ENCODE measurements at regions of chrX and their contacts with region 1.

Region 1: DNA sequence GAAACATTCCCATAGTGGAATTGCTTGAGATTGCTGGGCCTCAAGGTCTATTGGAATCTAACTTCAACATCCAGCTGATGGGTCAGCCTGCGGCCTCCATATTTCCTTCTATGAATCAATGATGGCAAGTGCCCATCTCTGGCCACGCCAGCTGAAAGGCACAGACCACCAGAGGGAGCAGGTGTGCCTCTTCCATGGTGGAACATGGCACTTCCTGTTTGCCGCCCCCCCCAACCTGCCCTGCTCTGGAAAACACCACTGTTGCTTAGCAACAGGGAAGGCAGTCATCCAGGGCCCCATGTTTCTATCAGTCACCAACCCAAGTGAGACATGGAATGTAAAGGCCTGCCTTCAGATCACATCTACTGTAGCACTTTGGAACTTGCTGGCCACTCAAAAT is 11.6 kb downstream of the PAGE4 start:
- DNase-seq: peak; percentile 54
- H3K4me3 ChIP-seq: no peak overlapping the region
- H3K27ac ChIP-seq: no peak overlapping the region
- H3K4me1 ChIP-seq: no peaks in the 10 kb centered on the region
- H3K27me3 ChIP-seq: no peaks in the 10 kb centered on the region
- CTCF ChIP-seq: peak; percentile 38 to 49

Region 2: DNA sequence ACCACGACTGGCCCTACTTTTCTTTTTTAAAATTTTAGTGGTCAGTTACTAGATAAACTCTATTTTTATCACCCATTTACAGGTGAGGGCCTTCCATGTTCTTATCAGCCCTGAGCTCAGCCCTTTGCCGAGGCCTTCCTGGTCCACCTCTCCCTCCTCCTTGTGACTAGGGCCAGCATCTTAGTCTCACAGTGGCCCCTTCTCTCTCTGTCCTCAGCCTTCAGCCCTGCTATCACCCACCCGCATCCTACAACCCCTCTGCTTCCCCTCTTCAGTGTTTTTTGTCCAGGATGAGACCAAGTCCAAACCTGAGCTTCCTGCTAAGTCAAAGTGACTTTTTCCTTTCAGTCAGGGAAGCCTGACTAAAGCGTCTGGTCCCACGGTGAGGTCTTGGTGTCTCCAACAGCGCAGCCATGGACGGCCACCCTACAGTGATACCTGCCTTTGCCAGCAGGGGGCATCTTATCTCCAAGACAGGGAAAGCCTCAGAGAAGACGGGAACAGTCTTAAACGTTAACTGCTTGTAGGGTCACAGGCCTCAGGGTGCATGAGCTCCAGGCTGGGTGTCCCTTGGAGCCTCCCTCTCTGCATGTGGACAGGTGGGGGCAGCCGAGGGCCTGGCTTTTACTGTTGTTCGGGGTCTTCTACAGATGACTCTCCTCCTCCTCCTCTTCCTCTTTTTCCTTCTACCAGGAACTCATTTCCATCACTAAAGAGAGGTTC is 548.9 kb before region 1 on chrX:
- CTCF ChIA-PET with region 1: no interaction called
- dilution Hi-C with region 1: no loop called
- in situ Hi-C with region 1: no loop called
- intact Hi-C with region 1: loop called (anchors 1 kb)
- DNase-seq: peak; percentile 20
- H3K4me3 ChIP-seq: no peak overlapping the region
- H3K27ac ChIP-seq: no peak overlapping the region
- H3K4me1 ChIP-seq: no peaks in the 10 kb centered on the region
- H3K27me3 ChIP-seq: no peaks in the 10 kb centered on the region
- CTCF ChIP-seq: peak; percentile 45 to 65

Region 3: GRCh38 chrX:49761481-49761880 is 79.2 kb before region 1 on chrX:
- CTCF ChIA-PET with region 1: no interaction called
- dilution Hi-C with region 1: no loop called
- in situ Hi-C with region 1: no loop called
- intact Hi-C with region 1: loop called (anchors 1 kb)
- DNase-seq: no peak
- H3K4me3 ChIP-seq: no peak overlapping the region
- H3K27ac ChIP-seq: no peak overlapping the region
- H3K4me1 ChIP-seq: no peaks in the 10 kb centered on the region
- H3K27me3 ChIP-seq: peaks cover 2% of the 10 kb centered on the region
- CTCF ChIP-seq: peak; percentile 55 to 65

Region 4: GRCh38 chrX:49829016-49829415 is 11.7 kb before region 1 on chrX and contains the start of gene PAGE4:
- CTCF ChIA-PET with region 1: no interaction called
- dilution Hi-C with region 1: no loop called
- in situ Hi-C with region 1: no loop called
- intact Hi-C with region 1: no loop called
- DNase-seq: no peak
- H3K4me3 ChIP-seq: no peak within 1 kb of the TSS
- H3K27ac ChIP-seq: no peak within 1 kb of the TSS
- H3K4me1 ChIP-seq: no peaks in the 10 kb centered on the region
- H3K27me3 ChIP-seq: peaks cover 2% of the 10 kb centered on the region
- CTCF ChIP-seq: no peak
- total RNA-seq, gene PAGE4: not detected

Region 5: GRCh38 chrX:49878834-49879659 is 38.4 kb after region 1 on chrX and contains the start of gene USP27X:
- CTCF ChIA-PET with region 1: no interaction called
- dilution Hi-C with region 1: no loop called
- in situ Hi-C with region 1: no loop called
- intact Hi-C with region 1: loop called (anchors 1 kb)
- DNase-seq: peak; percentile 75
- H3K4me3 ChIP-seq: peak within 1 kb of the TSS; percentile 37 to 64 (median 51)
- H3K27ac ChIP-seq: peak within 1 kb of the TSS; percentile 25
- H3K4me1 ChIP-seq: peaks cover 10% of the 10 kb centered on the region
- H3K27me3 ChIP-seq: no peaks in the 10 kb centered on the region
- CTCF ChIP-seq: peak; percentile 40 to 49
- total RNA-seq, gene USP27X: 2.4 to 2.5 TPM

Region 6: GRCh38 chrX:49915361-49916222 is 74.9 kb after region 1 on chrX:
- CTCF ChIA-PET with region 1: no interaction called
- dilution Hi-C with region 1: no loop called
- in situ Hi-C with region 1: no loop called
- intact Hi-C with region 1: no loop called
- DNase-seq: peak; percentile 43
- H3K4me3 ChIP-seq: no peak overlapping the region
- H3K27ac ChIP-seq: no peak overlapping the region
- H3K4me1 ChIP-seq: no peaks in the 10 kb centered on the region
- H3K27me3 ChIP-seq: peaks cover 5% of the 10 kb centered on the region
- CTCF ChIP-seq: peak; percentile 92 to 96

Region 7: DNA sequence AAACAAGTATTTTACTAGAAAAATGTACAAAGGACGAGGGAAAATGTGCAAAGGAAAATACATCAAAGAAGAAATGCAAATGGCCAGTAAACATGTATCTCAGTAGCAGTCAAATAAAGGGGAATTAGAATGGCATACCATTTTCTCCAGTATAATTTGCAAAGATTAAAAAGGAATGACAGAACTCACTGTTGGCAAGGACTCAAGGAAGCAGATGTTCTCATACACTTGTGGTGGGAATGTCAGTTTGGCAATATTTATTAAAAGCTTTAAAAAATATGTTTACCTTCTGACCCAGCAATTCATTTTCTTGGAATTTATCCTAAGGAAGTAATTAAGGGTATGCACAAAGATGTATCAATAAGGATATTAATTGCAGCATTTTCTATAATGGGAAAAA is 89.4 kb after region 1 on chrX:
- CTCF ChIA-PET with region 1: no interaction called
- dilution Hi-C with region 1: no loop called
- in situ Hi-C with region 1: no loop called
- intact Hi-C with region 1: no loop called
- DNase-seq: no peak
- H3K4me3 ChIP-seq: no peak overlapping the region
- H3K27ac ChIP-seq: no peak overlapping the region
- H3K4me1 ChIP-seq: no peaks in the 10 kb centered on the region
- H3K27me3 ChIP-seq: no peaks in the 10 kb centered on the region
- CTCF ChIP-seq: no peak

Region 8: DNA sequence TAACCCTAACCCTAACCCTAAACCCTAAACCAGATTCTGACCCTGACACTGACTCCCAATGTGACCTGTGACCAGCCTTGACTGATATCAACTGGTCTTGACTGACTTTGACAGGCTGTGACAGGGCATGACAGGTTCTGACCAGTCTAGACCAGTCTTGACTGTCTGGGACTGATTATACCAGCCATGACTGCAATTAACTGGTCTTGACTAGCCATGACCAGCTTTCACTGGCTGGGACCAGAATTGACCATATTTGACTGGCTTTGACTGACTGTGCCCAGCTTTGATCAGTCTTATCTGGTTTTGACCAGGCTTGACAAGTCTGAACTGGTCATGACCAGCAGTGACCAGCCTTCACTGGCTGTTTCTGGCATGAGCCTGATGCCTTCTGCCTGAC is 1165.4 kb after region 1 on chrX:
- CTCF ChIA-PET with region 1: no interaction called
- dilution Hi-C with region 1: no loop called
- in situ Hi-C with region 1: no loop called
- intact Hi-C with region 1: no loop called
- DNase-seq: no peak
- H3K4me3 ChIP-seq: no peak overlapping the region
- H3K27ac ChIP-seq: no peak overlapping the region
- H3K4me1 ChIP-seq: no peaks in the 10 kb centered on the region
- H3K27me3 ChIP-seq: peaks cover 3% of the 10 kb centered on the region
- CTCF ChIP-seq: no peak